ENCODE measurements at regions of chr16 and their contacts with region 1.

Region 1: DNA sequence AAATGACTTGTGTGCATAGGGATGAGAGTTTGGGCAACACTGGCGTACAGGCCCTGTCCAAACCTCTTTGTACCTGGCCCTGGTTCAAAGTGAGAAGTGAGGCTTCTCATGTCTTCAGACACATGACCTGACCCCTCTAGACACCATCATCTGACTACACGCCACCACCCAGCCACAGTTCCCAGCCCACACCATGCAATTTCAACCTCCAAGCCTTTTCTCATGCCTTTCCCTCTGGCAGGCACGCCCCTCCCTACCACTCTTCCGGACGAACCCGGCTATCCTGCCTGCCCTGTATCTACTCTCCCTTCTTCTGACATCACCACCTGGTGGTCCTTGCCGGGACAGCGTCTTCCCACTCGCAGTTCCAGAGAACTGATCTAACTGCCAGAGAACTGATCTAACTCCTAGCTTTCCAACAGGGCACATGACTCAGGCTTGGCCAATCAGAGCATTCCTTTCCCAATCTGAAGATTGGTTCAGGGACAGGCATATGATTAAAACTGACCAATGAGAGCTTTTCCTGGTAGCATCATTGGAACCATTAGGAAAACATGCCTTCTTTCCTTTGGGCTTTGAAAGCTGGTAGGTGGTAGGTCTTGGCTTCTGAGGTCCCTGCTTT is 27.1 kb upstream of the IL21R start:
- DNase-seq: peak; percentile 55 to 75
- H3K4me3 ChIP-seq: no peak overlapping the region
- H3K27ac ChIP-seq: no peak overlapping the region
- H3K4me1 ChIP-seq: peaks cover 0 to 6% (median 2%) of the 10 kb centered on the region in 4 donors
- H3K27me3 ChIP-seq: no peaks in the 10 kb centered on the region
- CTCF ChIP-seq: peak; percentile 32 to 44

Region 2: GRCh38 chr16:27449434-27450195 is 74.7 kb after region 1 on chr16:
- intact Hi-C with region 1: loop called (anchors 10 kb)
- DNase-seq: no peak
- H3K4me3 ChIP-seq: no peak overlapping the region
- H3K27ac ChIP-seq: no peak overlapping the region
- H3K4me1 ChIP-seq: no peaks in the 10 kb centered on the region
- H3K27me3 ChIP-seq: peaks cover 0 to 46% of the 10 kb centered on the region in 2 donors
- CTCF ChIP-seq: no peak

Measured in tibial artery (tissue), 4 donors.